Activated B cell treated with CpG ODN at 0.5 μM for 24 hours (primary cell): ENCODE measurements at regions of chr2 and their contacts with region 1.

Region 1: GRCh38 chr2:168039885-168040284 is 207.5 kb downstream of the STK39 start:
- DNase-seq: no peak
- ATAC-seq: peak; percentile 30
- H3K4me3 Mint-ChIP-seq: peak overlapping the region; percentile 2
- H3K27ac Mint-ChIP-seq: no peak overlapping the region
- H3K4me1 Mint-ChIP-seq: peaks cover 83% of the 10 kb centered on the region
- H3K27me3 Mint-ChIP-seq: no peaks in the 10 kb centered on the region
- CTCF ChIP-seq: no peak

Region 2: DNA sequence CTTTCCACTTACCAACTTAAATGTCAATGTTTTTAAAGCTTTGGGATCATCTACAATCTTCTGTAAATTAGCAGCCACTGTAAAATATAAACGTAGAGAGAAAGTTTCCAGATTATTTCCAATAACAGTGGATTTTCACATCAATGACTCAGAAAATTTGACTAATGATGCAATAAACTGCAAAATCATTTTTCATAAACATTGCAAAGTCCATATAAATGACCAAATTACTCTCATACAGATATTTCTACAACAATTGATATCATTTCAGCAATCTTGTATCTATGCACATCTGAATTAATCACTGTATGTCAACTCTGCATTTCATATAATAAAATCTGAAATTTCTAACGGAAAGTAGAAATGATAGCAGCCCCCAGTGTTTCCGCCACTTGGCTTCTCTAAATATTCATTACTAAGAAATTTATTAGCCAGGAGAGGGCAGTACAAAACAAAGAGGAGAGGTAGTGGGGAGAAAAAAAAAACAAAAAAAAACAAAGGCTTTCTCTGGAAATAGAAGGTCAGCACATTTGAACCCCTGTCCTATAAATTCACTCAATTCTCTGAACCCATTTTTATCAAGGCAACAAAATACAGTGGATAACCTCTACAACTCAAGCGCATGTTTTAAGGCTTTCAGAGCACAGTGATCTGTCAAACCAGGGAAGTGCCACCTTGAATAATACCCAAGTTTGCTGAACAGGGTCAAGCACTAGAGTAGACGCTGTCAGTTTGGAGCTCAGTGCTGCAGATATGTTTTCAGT is 75.1 kb before region 1 on chr2:
- CTCF ChIA-PET with region 1: no interaction called
- POLR2A ChIA-PET with region 1: no interaction called
- intact Hi-C with region 1: loop called (anchors 5 kb)
- DNase-seq: no peak
- ATAC-seq: no peak
- H3K4me3 Mint-ChIP-seq: no peak overlapping the region
- H3K27ac Mint-ChIP-seq: no peak overlapping the region
- H3K4me1 Mint-ChIP-seq: peaks cover 20% of the 10 kb centered on the region
- H3K27me3 Mint-ChIP-seq: no peaks in the 10 kb centered on the region
- CTCF ChIP-seq: no peak

Region 3: GRCh38 chr2:168090366-168091135 is 50.7 kb after region 1 on chr2:
- CTCF ChIA-PET with region 1: no interaction called
- POLR2A ChIA-PET with region 1: interaction called, 3 read pairs
- intact Hi-C with region 1: loop called (anchors 1 kb)
- DNase-seq: no peak
- ATAC-seq: peak; percentile 80
- H3K4me3 Mint-ChIP-seq: peak overlapping the region; percentile 38
- H3K27ac Mint-ChIP-seq: peak overlapping the region; percentile 79
- H3K4me1 Mint-ChIP-seq: peaks cover 33% of the 10 kb centered on the region
- H3K27me3 Mint-ChIP-seq: no peaks in the 10 kb centered on the region
- CTCF ChIP-seq: no peak